Dorsolateral prefrontal cortex (tissue), 120 donors: ENCODE measurements at regions of chr1 and their contacts with region 1.

Region 1: DNA sequence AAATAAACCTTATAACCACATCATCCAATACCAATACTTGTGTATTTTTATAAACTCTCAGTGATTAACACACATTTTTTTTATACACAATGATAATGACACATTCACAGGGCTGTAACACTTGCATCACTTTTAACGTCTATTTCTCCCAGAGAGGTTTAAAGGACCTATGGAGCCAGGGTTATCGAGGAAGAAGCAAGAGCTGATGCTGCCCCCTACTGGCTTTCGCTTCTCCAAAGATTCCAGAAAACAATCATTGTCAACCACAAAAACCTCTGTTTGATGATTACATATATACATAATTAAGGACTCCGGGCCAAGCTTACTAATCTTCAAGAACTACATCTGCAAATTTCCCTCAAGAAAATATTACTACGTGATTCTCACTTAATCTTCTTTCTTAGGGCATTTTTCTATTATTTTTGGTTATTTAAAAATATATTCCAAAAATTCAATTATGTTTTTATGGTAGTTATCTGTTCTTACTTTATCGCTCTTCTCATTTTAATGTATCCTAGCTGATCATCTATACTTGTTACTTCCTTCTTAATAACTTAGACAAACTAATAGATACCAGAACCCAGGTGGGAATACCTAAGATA is 214.5 kb downstream of the VAV3 start:
- DNase-seq: peak in 8 of 10 donors; percentile 30 to 66 (median 50)
- H3K4me3 ChIP-seq: no peak overlapping the region
- H3K27ac ChIP-seq: no peak overlapping the region
- H3K27me3 ChIP-seq: no peaks in the 10 kb centered on the region
- CTCF ChIP-seq: peak; percentile 44 to 86 (median 70)

Region 2: DNA sequence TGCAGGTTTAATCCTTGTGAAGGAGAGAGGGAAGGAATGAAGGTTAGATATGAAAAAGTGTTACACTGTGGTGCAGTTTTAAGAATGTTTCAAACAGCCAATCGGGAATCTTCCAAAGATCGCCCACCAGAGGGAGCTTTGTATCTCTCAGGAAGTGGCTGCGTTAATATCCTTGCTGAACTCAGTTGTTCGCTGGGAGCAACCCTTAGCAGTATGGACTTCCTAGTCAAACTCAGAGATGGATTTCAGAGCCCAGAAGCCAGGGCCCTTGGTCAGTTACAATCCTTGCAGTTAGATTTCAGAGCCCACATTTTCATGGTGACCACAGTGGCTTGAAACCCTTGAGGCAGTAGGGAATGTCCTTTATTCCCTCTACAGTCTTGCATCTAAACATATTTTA is 473.4 kb before region 1 on chr1:
- intact Hi-C with region 1: loop called in 1 of 2 experiments (anchors 5 kb)
- DNase-seq: peak in 3 of 10 donors; percentile 39 to 40 (median 39)
- H3K4me3 ChIP-seq: no peak overlapping the region
- H3K27ac ChIP-seq: no peak overlapping the region
- H3K27me3 ChIP-seq: no peaks in the 10 kb centered on the region
- CTCF ChIP-seq: peak in 53 of 56 donors; percentile 24 to 71 (median 50)

Region 3: DNA sequence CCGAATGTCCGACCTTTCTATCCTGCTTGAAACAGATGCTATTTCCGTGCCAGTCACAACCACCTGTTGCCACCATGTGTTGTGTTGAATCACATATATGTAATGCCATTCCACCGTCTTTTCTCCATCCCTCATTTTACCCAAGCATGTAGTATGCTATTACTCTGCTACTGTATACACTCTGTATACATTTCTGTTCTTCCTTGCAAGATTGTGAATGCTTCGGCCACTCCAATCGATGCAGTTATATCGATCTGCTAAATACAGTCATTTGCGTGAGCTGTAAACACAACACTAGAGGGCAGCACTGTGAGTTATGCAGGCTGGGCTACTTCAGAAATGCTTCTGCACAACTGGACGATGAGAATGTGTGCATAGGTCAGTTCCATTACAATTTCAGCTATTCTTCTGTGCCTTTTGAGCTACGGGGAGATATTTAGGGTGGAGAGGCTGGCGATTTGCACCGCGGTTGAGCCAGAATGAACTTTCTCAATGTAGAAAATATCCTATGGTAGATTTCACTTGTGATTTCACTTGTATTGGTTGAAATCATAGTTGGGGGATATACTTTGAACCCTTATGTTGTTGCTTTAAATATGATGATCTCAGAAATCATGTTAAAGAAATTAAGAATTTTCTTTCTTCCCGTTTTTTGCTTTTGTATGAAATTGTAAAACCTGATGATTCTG is 319.8 kb before region 1 on chr1:
- intact Hi-C with region 1: loop called in 1 of 2 experiments (anchors 10 kb)
- DNase-seq: peak in 2 of 10 donors; percentile 14 to 27
- H3K4me3 ChIP-seq: no peak overlapping the region
- H3K27ac ChIP-seq: no peak overlapping the region
- H3K27me3 ChIP-seq: no peaks in the 10 kb centered on the region
- CTCF ChIP-seq: peak in 55 of 56 donors; percentile 35 to 75 (median 62)

Region 4: GRCh38 chr1:107807405-107807804 is 56.9 kb after region 1 on chr1:
- intact Hi-C with region 1: no loop called
- DNase-seq: no peak
- H3K4me3 ChIP-seq: no peak overlapping the region
- H3K27ac ChIP-seq: no peak overlapping the region
- H3K27me3 ChIP-seq: peaks cover 0 to 15% (median 0%) of the 10 kb centered on the region in 45 donors
- CTCF ChIP-seq: no peak